Heart right ventricle (tissue), 16 donors: ENCODE measurements at regions of chr17 and their contacts with region 1.

Region 1: DNA sequence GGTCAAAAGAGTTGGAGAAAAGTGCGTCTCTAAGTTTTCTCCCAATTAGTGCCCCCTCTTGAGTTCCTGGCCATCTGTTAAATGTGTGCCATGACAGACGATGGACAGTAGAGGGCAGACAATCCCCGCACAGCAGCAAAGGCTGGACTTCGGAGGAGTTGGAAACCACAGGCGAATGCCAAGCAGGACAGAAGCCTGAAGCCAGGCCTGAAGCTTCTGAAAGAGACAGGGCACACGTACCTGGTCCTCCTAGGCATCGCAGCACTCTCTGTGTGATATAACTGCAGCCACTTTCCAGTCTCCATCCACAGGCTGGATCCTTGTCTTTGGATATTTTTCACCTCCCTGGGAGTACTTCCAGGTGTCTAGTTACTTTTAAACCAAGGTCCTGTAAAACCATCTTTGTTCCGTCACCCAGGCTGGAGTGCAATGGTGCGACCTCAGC is 14.5 kb downstream of the C17orf100 start:
- DNase-seq: peak; percentile 54 to 75
- ATAC-seq: peak; percentile 85 to 95 (median 92)
- H3K4me3 ChIP-seq: no peak overlapping the region
- H3K27ac ChIP-seq: no peak overlapping the region
- H3K4me1 ChIP-seq: peaks cover 0 to 10% (median 0%) of the 10 kb centered on the region in 9 donors
- H3K27me3 ChIP-seq: peaks cover 0 to 51% (median 27%) of the 10 kb centered on the region in 7 donors
- CTCF ChIP-seq: peak; percentile 85 to 95 (median 92)

Region 2: DNA sequence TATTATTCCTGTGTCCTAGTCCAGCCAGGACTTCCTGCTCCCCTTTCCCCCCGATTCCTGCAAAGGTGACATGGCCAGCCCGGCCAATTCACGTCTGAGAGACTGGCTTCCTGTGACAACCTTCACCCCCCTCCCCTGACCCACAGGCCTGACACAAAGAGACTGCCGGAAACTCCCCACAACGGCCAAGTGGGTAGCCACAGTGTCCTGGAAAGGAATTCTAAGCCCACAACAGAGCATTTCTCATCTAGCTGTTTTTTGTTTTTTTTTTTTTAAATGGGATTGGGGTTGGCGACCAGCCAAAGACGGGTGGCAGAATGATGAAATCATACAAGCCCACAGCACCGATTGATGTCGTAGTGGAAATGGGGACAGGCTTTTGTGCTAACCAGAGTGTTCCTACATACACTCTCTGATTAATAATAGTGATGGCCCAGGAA is 86.9 kb after region 1 on chr17:
- intact Hi-C with region 1: loop called in 3 of 10 experiments (anchors 10 kb)
- DNase-seq: peak; percentile 65 to 82
- ATAC-seq: peak; percentile 75 to 91 (median 85)
- H3K4me3 ChIP-seq: peak overlapping the region in 1 of 10 donors; percentile 0
- H3K27ac ChIP-seq: peak overlapping the region; percentile 82 to 98 (median 94)
- H3K4me1 ChIP-seq: peaks cover 16 to 62% (median 48%) of the 10 kb centered on the region in 9 donors
- H3K27me3 ChIP-seq: no peaks in the 10 kb centered on the region
- CTCF ChIP-seq: no peak

Region 3: GRCh38 chr17:6775871-6776405 is 109.8 kb after region 1 on chr17 and contains the start of gene FBXO39:
- intact Hi-C with region 1: no loop called
- DNase-seq: peak in 1 of 2 donors; percentile 25
- ATAC-seq: peak; percentile 29 to 68 (median 58)
- H3K4me3 ChIP-seq: no peak within 1 kb of the TSS
- H3K27ac ChIP-seq: no peak within 1 kb of the TSS
- H3K4me1 ChIP-seq: peaks cover 0 to 7% (median 0%) of the 10 kb centered on the region in 9 donors
- H3K27me3 ChIP-seq: peaks cover 0 to 49% (median 15%) of the 10 kb centered on the region in 7 donors
- CTCF ChIP-seq: no peak
- total RNA-seq, gene FBXO39: 0.26 TPM in 1 of 10 donors, not detected in the others

Region 4: DNA sequence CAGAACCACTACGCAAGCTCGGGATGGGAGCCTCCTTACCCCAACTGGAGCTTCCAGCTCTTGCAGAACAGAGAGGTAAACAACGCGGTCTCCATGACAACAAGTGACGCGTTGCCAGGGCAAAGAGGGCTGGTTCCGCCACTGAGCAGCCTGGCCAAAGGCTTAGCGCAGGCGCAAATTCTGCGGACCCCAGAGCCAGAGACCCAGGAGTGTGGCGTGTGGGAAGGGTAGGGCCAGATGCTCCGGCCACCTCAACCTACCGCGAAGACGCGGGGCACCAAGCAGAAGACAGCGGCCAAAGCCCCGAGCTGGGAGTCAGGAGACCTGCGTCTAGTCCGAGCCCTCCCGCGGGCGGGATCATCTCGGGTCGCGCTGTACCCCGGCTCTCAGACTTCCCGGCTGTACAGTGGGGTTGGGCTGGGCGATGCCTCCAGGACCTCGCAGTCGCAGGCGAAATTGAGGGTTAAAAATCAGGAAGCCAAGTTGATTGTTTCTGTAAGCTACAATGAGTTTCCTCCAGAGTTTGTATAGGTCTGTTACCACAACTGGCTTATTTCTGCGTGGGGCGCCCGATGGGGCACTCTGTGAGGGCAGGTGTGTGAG is 165.7 kb after region 1 on chr17 and contains the start of gene TEKT1:
- intact Hi-C with region 1: loop called in 3 of 10 experiments (anchors 5 to 10 kb)
- DNase-seq: peak; percentile 68 to 79
- ATAC-seq: peak; percentile 61 to 94 (median 90)
- H3K4me3 ChIP-seq: peak within 1 kb of the TSS in 9 of 10 donors; percentile 5 to 48 (median 37)
- H3K27ac ChIP-seq: no peak within 1 kb of the TSS
- H3K4me1 ChIP-seq: peaks cover 0 to 13% (median 0%) of the 10 kb centered on the region in 9 donors
- H3K27me3 ChIP-seq: peaks cover 5 to 97% (median 73%) of the 10 kb centered on the region in 7 donors
- CTCF ChIP-seq: no peak
- total RNA-seq, gene TEKT1: not detected

Region 5: DNA sequence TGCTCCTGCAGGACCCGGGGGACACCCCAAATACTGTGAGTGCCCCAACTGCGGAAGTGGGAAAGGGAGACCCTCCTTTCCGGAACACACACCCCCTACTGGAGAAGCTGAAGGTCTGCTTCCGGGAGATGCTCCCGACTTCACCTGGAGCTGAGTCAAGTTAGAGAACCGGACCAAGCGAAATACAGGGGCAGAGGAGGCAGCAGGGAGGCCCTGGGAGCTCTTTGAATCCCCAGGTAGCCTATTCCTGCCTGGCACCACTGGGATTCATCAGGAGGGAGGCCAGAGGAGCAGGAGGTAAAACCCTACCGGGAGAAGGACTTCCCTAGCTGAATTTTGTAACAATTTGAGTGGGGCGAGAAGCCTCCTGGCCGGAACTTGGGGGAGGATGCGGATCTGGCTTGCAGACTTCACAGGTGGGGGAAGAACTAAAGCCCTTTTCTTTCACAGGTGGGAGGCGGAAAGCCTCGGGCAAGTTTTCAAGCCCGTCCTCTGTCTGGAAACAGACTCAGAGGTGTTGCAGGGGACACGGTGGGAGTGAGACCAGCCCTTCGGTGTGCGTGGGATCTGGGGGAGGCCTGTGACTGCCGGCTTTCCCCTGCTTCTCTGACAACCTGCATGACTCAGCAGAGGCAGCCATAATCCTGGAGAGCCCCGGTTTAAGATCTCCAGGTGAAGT is 187.8 kb after region 1 on chr17:
- intact Hi-C with region 1: loop called in 1 of 10 experiments (anchors 5 kb)
- DNase-seq: no peak
- ATAC-seq: no peak
- H3K4me3 ChIP-seq: peak overlapping the region in 1 of 10 donors; percentile 16
- H3K27ac ChIP-seq: no peak overlapping the region
- H3K4me1 ChIP-seq: no peaks in the 10 kb centered on the region
- H3K27me3 ChIP-seq: peaks cover 0 to 29% (median 22%) of the 10 kb centered on the region in 7 donors
- CTCF ChIP-seq: peak in 2 of 9 donors; percentile 11 to 19

Region 6: GRCh38 chr17:6913608-6914443 is 247.7 kb after region 1 on chr17:
- intact Hi-C with region 1: loop called in 1 of 10 experiments (anchors 10 kb)
- DNase-seq: peak; percentile 80 to 84
- ATAC-seq: peak; percentile 78 to 95 (median 84)
- H3K4me3 ChIP-seq: peak overlapping the region in 7 of 10 donors; percentile 24 to 53 (median 44)
- H3K27ac ChIP-seq: no peak overlapping the region
- H3K4me1 ChIP-seq: peaks cover 0 to 22% (median 9%) of the 10 kb centered on the region in 9 donors
- H3K27me3 ChIP-seq: peaks cover 0 to 12% (median 5%) of the 10 kb centered on the region in 7 donors
- CTCF ChIP-seq: peak; percentile 77 to 94 (median 87)

Region 7: DNA sequence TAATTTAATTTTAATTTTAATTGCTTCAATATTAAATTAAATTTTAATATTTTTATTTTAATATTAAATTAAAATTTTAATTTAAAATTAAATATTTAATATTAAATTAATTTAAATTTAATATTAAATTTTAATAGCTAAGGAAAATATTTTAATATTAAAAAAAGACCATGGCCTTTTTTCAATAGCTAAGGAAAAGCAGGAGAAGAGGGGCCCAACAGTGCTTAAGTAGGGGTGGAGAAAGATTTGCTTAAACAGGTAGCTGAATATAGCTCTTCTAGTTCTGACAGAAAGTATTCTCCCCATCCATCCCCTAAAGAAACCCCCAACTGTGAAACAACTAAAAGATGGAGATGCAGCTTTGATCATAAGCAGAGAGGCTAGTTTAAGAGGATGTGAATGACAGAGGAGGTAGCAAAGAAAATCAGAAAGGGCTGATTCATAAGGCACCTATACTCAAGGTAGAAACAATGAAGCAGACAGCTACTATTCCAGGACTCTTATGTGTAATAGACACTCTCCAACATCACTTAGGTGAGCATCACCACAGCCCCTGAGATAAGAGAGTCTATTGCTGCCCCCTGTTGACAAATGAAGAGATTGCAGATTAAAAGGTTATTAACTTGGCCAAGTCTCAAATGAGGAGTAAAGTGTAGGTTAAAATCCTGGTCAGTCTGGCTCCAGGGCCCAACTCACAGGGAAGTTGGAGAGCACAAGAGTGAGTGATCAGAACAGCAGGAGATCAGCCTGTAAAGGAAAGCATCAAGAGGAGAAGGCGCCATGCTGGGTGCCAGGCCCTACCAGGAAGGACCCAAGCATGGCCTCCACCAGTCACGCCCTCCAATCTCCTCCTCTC is 338.5 kb after region 1 on chr17:
- intact Hi-C with region 1: loop called in 9 of 10 experiments (anchors 5 to 10 kb)
- DNase-seq: peak in 1 of 2 donors; percentile 36
- ATAC-seq: peak; percentile 50 to 80 (median 72)
- H3K4me3 ChIP-seq: no peak overlapping the region
- H3K27ac ChIP-seq: no peak overlapping the region
- H3K4me1 ChIP-seq: peaks cover 0 to 13% (median 4%) of the 10 kb centered on the region in 9 donors
- H3K27me3 ChIP-seq: no peaks in the 10 kb centered on the region
- CTCF ChIP-seq: peak; percentile 64 to 81 (median 73)